Cardiac septum (tissue), 1 donor: ENCODE measurements at regions of chr4 and their contacts with region 1.

Region 1: DNA sequence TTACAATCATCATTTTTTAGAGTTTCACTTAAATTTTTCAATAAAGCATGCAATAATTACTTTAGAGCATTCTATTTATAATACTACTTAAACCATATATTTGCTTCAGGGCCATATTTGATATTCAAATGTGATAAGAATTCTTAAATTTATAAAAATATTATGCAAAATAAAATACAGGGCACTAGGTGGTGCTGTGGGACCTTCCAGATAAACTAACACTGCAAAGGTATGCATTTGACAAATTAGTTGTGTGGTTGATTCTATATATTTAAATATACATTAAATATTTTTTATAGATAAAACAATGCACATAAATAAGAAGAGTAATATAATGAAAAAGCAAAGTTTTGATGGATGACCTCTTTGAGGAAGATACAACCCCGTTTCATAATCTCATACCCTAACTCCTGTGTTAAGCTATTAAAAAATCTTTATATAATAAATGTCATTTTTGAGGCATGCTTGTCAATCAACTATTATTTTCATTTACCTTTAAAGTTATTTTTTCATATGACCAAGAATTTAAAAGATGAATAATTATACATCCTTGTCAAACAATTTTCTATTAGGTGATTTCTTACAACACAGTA is 128.4 kb downstream of the REELD1 start:
- DNase-seq: no peak

Region 2: GRCh38 chr4:146202665-146203064 is 140.0 kb before region 1 on chr4:
- intact Hi-C with region 1: no loop called
- DNase-seq: no peak

Region 3: GRCh38 chr4:146299607-146300006 is 43.1 kb before region 1 on chr4:
- intact Hi-C with region 1: no loop called
- DNase-seq: no peak

Region 4: GRCh38 chr4:146916479-146917076 is 573.9 kb after region 1 on chr4:
- intact Hi-C with region 1: loop called (anchors 5 kb)
- DNase-seq: no peak

Region 5: DNA sequence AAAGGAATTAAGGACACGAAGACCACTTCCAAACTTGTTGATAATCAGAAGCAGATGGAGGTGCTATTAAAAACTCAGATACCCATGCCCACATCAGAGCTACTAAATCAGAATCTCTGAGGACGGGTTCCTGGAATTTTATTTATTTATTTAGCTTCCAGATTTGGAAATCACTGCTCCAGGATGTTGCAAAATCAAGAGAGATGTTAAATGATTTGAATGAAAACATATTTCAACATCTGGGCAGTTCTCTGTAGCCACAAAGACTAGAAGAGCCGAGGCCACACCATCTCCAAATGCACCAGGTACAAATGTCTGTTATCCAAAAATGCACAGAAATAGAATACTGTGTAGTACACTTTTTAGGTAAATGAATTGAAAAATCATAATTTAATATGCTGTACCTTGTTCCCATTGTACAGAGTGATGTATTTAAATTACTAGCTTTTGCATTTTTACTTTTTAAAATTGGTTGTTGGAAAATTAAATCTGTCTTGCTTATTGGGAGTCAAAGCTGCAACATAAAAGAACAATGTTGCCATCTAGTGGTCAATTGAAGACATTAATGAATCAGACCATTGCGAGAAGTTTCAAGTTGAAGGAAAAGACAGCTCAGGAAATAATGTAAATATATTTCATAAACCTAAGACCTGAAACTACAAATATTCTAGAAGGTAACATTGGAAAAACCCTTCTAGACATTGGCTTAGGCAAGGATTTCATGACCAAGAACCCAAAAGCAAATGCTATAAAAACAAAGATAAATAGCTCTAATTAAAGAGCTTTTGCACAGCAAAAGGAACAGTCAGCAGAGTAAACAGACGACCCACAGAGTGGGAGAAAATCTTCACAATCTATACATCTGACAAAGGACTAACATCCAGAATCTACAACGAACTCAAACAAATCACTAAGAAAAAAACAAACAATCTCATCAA is 754.2 kb after region 1 on chr4:
- intact Hi-C with region 1: loop called (anchors 5 kb)
- DNase-seq: no peak